Left ventricle myocardium inferior (tissue), 1 donor: ENCODE measurements at regions of chr2 and their contacts with region 1.

Region 1: GRCh38 chr2:72150157-72150865 is 2.6 kb upstream of the CYP26B1 start:
- DNase-seq: peak; percentile 57
- H3K4me3 ChIP-seq: peak overlapping the region; percentile 70
- H3K27ac ChIP-seq: no peak overlapping the region
- H3K4me1 ChIP-seq: peaks cover 49% of the 10 kb centered on the region
- H3K27me3 ChIP-seq: peaks cover 87% of the 10 kb centered on the region
- CTCF ChIP-seq: peak; percentile 91

Region 2: GRCh38 chr2:71545572-71546274 is 604.6 kb before region 1 on chr2:
- intact Hi-C with region 1: loop called (anchors 10 kb)
- DNase-seq: peak; percentile 50
- H3K4me3 ChIP-seq: peak overlapping the region; percentile 45
- H3K27ac ChIP-seq: peak overlapping the region; percentile 83
- H3K4me1 ChIP-seq: peaks cover 16% of the 10 kb centered on the region
- H3K27me3 ChIP-seq: no peaks in the 10 kb centered on the region
- CTCF ChIP-seq: peak; percentile 81

Region 3: GRCh38 chr2:71801969-71802368 is 348.3 kb before region 1 on chr2:
- intact Hi-C with region 1: loop called (anchors 10 kb)
- DNase-seq: peak; percentile 69
- H3K4me3 ChIP-seq: no peak overlapping the region
- H3K27ac ChIP-seq: no peak overlapping the region
- H3K4me1 ChIP-seq: peaks cover 17% of the 10 kb centered on the region
- H3K27me3 ChIP-seq: peaks cover 8% of the 10 kb centered on the region
- CTCF ChIP-seq: peak; percentile 72

Region 4: DNA sequence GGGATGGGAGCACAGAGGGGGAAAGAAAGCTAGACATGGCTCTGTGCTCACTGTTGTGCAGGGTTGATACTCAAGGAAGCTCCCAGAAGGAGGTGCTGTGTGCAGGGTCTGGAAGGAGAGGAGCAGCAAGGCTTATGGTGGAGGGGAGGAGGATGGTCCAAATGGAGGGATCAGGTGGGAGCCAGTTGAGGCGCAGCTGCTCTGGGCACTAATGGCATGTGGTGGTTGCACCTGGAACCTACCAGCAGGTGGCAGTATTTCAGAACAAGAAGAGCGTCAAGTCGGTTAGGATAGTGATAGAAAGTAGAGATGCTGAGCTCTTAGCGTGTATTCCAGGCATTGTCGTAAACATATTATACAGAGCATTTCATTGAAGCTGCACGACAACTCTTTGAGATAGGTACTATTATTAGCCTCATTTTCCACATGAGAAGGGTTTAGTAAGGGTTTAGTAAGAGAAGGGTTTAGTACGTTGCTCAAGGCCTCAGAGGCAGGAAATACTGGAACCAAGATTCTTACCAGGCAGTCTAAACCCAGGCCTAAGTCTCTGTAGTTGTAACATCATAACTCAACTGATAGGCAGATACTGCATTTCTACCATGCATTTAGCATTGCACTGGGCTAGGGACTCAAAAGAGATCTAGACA is 226.3 kb before region 1 on chr2:
- intact Hi-C with region 1: loop called (anchors 5 kb)
- DNase-seq: peak; percentile 61
- H3K4me3 ChIP-seq: no peak overlapping the region
- H3K27ac ChIP-seq: no peak overlapping the region
- H3K4me1 ChIP-seq: no peaks in the 10 kb centered on the region
- H3K27me3 ChIP-seq: peaks cover 5% of the 10 kb centered on the region
- CTCF ChIP-seq: peak; percentile 88